PC-3 (cell line): ENCODE measurements at regions of chr19 and their contacts with region 1.

Region 1: DNA sequence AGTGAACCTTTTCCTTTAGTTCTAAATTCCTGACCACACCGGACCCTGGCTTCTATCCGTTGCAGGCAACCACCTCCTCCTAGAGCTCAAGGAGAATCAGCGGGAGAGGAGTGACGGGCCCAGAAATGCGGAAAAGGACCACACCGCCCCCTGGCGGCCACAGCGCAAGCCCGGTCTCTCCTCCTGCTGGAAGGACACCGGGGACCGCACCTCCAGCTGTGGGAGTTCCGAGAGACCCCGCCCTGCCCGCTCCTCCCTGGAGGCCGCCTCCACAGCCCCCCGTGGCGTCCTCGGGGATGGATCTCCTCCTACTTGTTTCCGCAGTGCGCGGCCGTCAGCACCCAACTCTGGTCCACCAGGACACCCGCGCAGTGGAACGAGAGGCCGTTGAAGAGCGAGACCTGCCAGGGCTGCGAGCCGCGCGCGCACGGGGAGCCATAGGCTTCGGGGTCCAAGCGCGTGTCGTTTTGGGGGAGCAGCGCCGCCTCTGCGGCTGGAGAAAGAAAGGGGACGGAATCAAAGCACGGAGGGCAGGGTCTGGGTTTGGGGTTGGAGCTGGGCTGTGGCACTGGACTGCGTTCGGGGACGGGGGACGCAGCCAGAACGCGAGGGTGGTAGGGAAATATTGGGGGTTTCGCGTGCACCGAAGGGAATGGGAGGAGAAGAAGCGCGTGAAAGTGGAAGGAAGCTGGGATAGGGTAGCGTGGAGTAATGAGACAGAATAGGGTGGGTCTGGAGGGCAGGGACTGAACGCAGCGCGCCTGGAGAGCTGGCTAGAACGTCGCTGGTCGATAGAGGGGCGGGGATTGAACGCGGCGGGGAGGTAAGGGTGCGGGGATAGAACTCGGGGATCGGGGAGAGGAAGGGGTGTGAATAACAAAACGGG is 2.5 kb downstream of the KLK10 start:
- DNase-seq: peak; percentile 95
- ATAC-seq: peak; percentile 74
- H3K4me3 ChIP-seq: peak overlapping the region; percentile 80
- H3K27ac ChIP-seq: no peak overlapping the region
- H3K4me1 ChIP-seq: peaks cover 24% of the 10 kb centered on the region
- H3K27me3 ChIP-seq: no peaks in the 10 kb centered on the region
- CTCF ChIP-seq: peak; percentile 98

Region 2: GRCh38 chr19:50626795-50627194 is 390.2 kb before region 1 on chr19:
- CTCF ChIA-PET with region 1: interaction called, 10 read pairs
- POLR2A ChIA-PET with region 1: no interaction called
- intact Hi-C with region 1: no loop called
- DNase-seq: no peak
- ATAC-seq: peak; percentile 50; the same call in 1 of the 2 replicates
- H3K4me3 ChIP-seq: no peak overlapping the region
- H3K27ac ChIP-seq: no peak overlapping the region
- H3K4me1 ChIP-seq: no peaks in the 10 kb centered on the region
- H3K27me3 ChIP-seq: no peaks in the 10 kb centered on the region; the same call in 1 of the 2 replicates
- CTCF ChIP-seq: no peak

Region 3: GRCh38 chr19:50804420-50805272 is 212.4 kb before region 1 on chr19:
- CTCF ChIA-PET with region 1: no interaction called
- POLR2A ChIA-PET with region 1: interaction called, 3 read pairs
- intact Hi-C with region 1: loop called (anchors 5 kb)
- DNase-seq: peak; percentile 99
- ATAC-seq: peak; percentile 96
- H3K4me3 ChIP-seq: peak overlapping the region; percentile 92
- H3K27ac ChIP-seq: peak overlapping the region; percentile 85
- H3K4me1 ChIP-seq: peaks cover 19% of the 10 kb centered on the region
- H3K27me3 ChIP-seq: no peaks in the 10 kb centered on the region
- CTCF ChIP-seq: no peak

Region 4: GRCh38 chr19:50933640-50934039 is 83.4 kb before region 1 on chr19:
- CTCF ChIA-PET with region 1: interaction called, 18 read pairs
- POLR2A ChIA-PET with region 1: interaction called, 3 read pairs
- intact Hi-C with region 1: loop called (anchors 1 kb)
- DNase-seq: peak; percentile 96
- ATAC-seq: peak; percentile 39
- H3K4me3 ChIP-seq: no peak overlapping the region
- H3K27ac ChIP-seq: peak overlapping the region; percentile 88
- H3K4me1 ChIP-seq: peaks cover 38% of the 10 kb centered on the region
- H3K27me3 ChIP-seq: no peaks in the 10 kb centered on the region
- CTCF ChIP-seq: no peak

Region 5: GRCh38 chr19:51070861-51071406 is 53.9 kb after region 1 on chr19:
- CTCF ChIA-PET with region 1: interaction called, 10 read pairs
- POLR2A ChIA-PET with region 1: no interaction called
- intact Hi-C with region 1: loop called (anchors 1 kb)
- DNase-seq: peak; percentile 91
- ATAC-seq: peak; percentile 85
- H3K4me3 ChIP-seq: peak overlapping the region; percentile 21; the same call in 1 of the 2 replicates
- H3K27ac ChIP-seq: peak overlapping the region; percentile 89
- H3K4me1 ChIP-seq: peaks cover 23% of the 10 kb centered on the region
- H3K27me3 ChIP-seq: no peaks in the 10 kb centered on the region
- CTCF ChIP-seq: no peak

Region 6: DNA sequence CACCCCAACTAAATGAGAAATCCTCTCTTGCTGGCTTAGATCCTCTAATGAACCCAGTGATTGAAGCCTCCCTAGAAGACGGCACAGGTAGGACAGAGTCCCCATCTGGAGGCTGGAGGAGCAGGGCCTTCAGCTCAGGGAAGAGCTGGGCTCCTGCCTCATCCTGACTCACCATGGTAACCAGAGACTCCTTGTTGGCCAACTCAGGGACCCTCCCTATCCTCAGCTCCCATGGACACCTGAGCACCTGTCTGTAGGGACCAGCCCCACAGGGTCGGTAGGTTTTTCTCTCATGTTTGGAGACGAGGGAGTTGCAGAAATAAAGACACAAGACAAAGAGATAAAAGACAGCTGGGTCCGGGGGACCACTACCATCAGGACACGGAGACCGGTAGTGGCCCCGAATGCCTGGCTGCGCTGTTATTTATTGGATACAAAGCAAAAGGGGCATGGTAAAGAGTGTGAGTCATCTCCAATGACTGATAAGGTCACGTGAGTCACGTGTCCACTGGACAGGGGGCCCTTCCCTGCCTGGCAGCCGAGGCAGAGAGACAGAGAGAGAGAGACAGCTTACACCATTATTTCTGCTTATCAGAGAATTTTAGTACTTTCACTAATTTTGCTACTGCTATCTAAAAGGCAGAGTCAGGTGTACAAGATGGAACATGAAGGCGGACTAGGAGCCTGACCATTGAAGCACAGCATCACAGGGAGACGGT is 151.7 kb after region 1 on chr19:
- CTCF ChIA-PET with region 1: no interaction called
- POLR2A ChIA-PET with region 1: no interaction called
- intact Hi-C with region 1: loop called (anchors 1 kb)
- DNase-seq: no peak
- ATAC-seq: no peak
- H3K4me3 ChIP-seq: no peak overlapping the region
- H3K27ac ChIP-seq: no peak overlapping the region
- H3K4me1 ChIP-seq: no peaks in the 10 kb centered on the region
- H3K27me3 ChIP-seq: peaks cover 75% of the 10 kb centered on the region
- CTCF ChIP-seq: no peak